Endothelial cell of umbilical vein (primary cell): ENCODE measurements at regions of chr18 and their contacts with region 1.

Region 1: DNA sequence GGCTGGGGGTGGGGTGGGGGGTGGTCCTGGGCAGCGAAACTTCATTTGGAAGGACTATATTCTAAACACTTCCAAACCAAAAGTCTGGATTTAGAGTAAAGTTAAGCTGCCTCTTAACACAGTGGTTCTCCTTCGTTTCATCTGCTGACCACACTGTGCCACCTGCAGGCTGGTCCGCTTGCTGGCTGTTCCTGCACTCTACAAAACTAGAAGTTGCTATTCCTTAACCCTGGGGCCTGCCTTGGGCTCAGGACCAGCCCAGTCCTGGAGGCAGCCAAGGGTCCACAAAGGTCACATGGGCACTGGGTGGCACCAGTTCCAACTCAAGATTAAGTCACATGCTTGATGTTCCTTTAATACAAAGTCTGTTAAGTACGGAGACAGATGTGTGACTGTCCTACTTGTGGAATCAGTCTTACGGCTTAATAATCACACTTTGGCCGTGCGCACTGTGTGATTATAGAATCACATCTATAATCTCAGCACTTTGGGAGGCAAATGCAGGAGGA is 195.4 kb downstream of the FAM210A start:
- DNase-seq: peak; percentile 79
- H3K4me3 ChIP-seq: no peak overlapping the region
- H3K27ac ChIP-seq: no peak overlapping the region
- H3K4me1 ChIP-seq: no peaks in the 10 kb centered on the region
- H3K27me3 ChIP-seq: peaks cover 0 to 5% of the 10 kb centered on the region in 2 experiments
- CTCF ChIP-seq: peak; percentile 59 to 75
- POLR2A ChIP-seq: no peak

Region 2: GRCh38 chr18:13381944-13382365 is 149.0 kb before region 1 on chr18:
- CTCF ChIA-PET with region 1: interaction called, 4 read pairs
- POLR2A ChIA-PET with region 1: no interaction called
- dilution Hi-C with region 1: no loop called
- intact Hi-C with region 1: loop called (anchors 5 kb)
- DNase-seq: peak; percentile 71
- H3K4me3 ChIP-seq: peak overlapping the region in 1 of 3 experiments; percentile 49
- H3K27ac ChIP-seq: peak overlapping the region; percentile 94
- H3K4me1 ChIP-seq: peaks cover 31% of the 10 kb centered on the region
- H3K27me3 ChIP-seq: no peaks in the 10 kb centered on the region
- CTCF ChIP-seq: no peak
- POLR2A ChIP-seq: no peak

Region 3: DNA sequence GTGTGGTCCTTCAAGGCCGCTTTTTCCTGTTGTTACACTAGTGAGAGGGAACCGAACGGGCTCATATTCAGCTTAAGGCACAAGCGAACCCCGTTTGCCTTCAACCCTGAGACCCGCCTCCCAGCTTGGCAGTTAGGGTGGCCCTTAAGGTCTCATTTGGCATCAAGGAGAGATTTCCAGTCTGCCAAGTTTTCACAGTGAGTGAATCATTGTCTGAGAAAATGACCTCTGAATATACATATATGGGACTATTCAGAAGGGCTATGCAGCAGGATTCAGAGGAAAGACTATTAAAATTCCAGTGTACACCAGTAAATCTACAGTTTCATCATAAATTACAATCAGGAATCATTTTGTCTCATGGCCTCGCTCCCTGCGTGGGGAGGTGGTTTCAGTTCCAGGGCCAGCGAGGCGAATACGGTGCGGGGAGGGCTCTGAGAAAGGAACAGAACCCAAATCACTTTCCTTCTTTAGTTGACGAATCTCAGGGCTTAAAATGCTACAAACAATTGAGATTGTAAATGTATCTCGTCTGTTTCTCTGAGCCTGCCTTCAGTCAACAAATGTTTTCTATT is 36.0 kb before region 1 on chr18:
- CTCF ChIA-PET with region 1: interaction called, 18 read pairs
- POLR2A ChIA-PET with region 1: no interaction called
- dilution Hi-C with region 1: no loop called
- intact Hi-C with region 1: loop called (anchors 5 kb)
- DNase-seq: peak; percentile 68
- H3K4me3 ChIP-seq: no peak overlapping the region
- H3K27ac ChIP-seq: no peak overlapping the region
- H3K4me1 ChIP-seq: peaks cover 9% of the 10 kb centered on the region
- H3K27me3 ChIP-seq: no peaks in the 10 kb centered on the region
- CTCF ChIP-seq: no peak
- POLR2A ChIP-seq: no peak

Region 4: GRCh38 chr18:13500227-13500865 is 30.6 kb before region 1 on chr18:
- CTCF ChIA-PET with region 1: interaction called, 18 read pairs
- POLR2A ChIA-PET with region 1: no interaction called
- dilution Hi-C with region 1: no loop called
- intact Hi-C with region 1: loop called (anchors 5 kb)
- DNase-seq: peak; percentile 83
- H3K4me3 ChIP-seq: no peak overlapping the region
- H3K27ac ChIP-seq: peak overlapping the region; percentile 57
- H3K4me1 ChIP-seq: peaks cover 29% of the 10 kb centered on the region
- H3K27me3 ChIP-seq: peaks cover 0 to 2% of the 10 kb centered on the region in 2 experiments
- CTCF ChIP-seq: no peak
- POLR2A ChIP-seq: no peak

Region 5: GRCh38 chr18:13520306-13520705 is 10.6 kb before region 1 on chr18:
- CTCF ChIA-PET with region 1: interaction called, 10 read pairs
- POLR2A ChIA-PET with region 1: no interaction called
- dilution Hi-C with region 1: no loop called
- intact Hi-C with region 1: no loop called
- DNase-seq: no peak
- H3K4me3 ChIP-seq: no peak overlapping the region
- H3K27ac ChIP-seq: no peak overlapping the region
- H3K4me1 ChIP-seq: no peaks in the 10 kb centered on the region
- H3K27me3 ChIP-seq: no peaks in the 10 kb centered on the region
- CTCF ChIP-seq: no peak
- POLR2A ChIP-seq: no peak

Region 6: DNA sequence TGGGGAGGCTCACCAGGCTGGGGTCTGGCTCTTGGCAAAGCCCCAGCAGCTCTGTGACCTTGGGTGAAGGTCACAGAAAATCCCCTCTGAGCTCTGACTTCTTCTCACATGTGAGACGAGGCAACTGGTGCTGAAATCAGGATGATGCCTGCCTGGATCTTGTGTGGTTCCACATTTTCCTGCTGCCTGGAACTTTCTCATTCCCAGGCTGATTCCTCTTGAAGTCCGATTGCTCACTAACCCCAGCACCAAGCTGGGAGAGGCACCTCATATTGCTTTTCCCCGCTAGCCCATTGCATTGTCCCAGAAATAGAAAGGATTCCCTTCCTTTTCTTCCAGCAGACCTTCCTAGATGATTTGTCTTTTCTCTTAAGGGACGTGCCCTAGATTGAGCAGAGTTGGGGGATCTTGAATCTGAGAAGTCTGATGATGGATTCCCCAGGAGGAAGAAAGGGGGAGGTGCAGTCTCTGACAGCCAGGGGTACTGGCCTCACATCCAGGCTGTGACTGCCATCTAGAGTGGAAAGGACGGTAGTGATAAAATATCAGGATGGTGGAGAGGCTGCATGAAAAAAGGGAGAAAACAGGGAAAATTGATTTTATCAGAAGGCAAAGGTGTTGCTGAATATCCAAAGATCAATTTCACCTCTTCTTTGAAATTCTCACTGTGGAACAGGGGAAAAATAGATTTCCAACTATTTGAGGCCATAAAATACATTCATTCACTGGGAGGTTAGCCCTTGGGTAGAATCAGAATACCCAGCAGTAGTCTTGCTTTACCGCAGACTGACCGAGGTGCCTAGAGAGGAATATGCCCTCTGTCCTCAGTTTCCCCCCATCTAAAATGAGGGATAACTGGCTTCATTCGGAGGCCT is 99.1 kb after region 1 on chr18:
- CTCF ChIA-PET with region 1: no interaction called
- POLR2A ChIA-PET with region 1: no interaction called
- dilution Hi-C with region 1: no loop called
- intact Hi-C with region 1: loop called (anchors 1 kb)
- DNase-seq: peak; percentile 67
- H3K4me3 ChIP-seq: no peak overlapping the region
- H3K27ac ChIP-seq: no peak overlapping the region
- H3K4me1 ChIP-seq: no peaks in the 10 kb centered on the region
- H3K27me3 ChIP-seq: no peaks in the 10 kb centered on the region
- CTCF ChIP-seq: peak; percentile 63 to 68
- POLR2A ChIP-seq: no peak